ENCODE measurements at regions of chr10 and their contacts with region 1.

Region 1: GRCh38 chr10:30783939-30784500 is 154.5 kb upstream of the LYZL2 start:
- DNase-seq: peak; percentile 88
- H3K4me3 ChIP-seq: peak overlapping the region; percentile 56
- H3K27ac ChIP-seq: no peak overlapping the region
- H3K4me1 ChIP-seq: no peaks in the 10 kb centered on the region
- H3K27me3 ChIP-seq: no peaks in the 10 kb centered on the region
- CTCF ChIP-seq: peak; percentile 94

Region 2: DNA sequence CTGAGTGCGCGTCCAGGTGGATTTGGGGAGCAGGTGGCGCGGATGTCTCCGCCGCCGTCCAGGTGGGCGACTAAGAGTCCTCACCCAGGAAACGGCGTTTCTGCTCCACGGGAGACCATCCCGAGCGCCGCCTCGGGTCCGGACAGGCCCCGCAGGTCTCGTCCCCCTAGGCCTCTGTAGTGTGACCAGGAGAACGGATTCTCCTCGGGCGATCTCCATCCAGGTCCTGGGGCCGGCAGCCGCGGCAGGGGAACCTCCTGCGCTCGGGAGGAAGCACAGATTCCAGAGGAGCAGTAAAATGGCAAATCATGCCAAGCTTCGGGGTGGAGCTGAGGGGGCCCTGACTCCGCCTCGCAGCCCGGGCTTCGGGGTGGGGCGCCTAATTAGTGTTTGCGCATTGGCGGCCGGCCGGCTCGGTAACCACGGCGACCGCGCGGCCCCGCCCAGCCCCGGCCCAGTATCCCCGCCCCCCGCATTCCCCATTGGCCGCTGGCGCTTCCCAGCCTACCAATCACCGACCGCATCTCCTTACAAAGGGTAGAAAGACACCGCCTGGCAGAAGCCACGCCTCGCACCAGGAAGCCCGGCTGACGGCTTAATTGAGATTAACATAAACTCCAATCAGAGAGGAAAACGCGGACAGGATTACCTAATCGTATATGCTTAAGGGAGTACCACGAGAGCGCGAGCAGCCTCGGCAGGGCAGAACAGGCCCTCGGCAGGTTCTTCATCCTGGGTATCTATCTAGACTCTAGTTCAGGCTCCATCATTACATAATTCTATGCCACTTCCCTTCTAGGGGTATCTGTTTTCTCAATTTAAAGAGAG is 976.0 kb after region 1 on chr10:
- CTCF ChIA-PET with region 1: no interaction called
- POLR2A ChIA-PET with region 1: no interaction called
- intact Hi-C with region 1: loop called (anchors 10 kb)
- DNase-seq: peak; percentile 99
- H3K4me3 ChIP-seq: peak overlapping the region; percentile 82
- H3K27ac ChIP-seq: peak overlapping the region; percentile 70
- H3K4me1 ChIP-seq: peaks cover 8% of the 10 kb centered on the region
- H3K27me3 ChIP-seq: no peaks in the 10 kb centered on the region
- CTCF ChIP-seq: no peak